CD14-positive monocyte (primary cell): ENCODE measurements at regions of chr1 and their contacts with region 1.

Region 1: GRCh38 chr1:186985889-186986491 is 157.2 kb downstream of the PLA2G4A start:
- DNase-seq: peak; percentile 27 to 63 (median 52)
- H3K4me3 ChIP-seq: no peak overlapping the region
- H3K4me3 Mint-ChIP-seq: no peak overlapping the region
- H3K27ac ChIP-seq: no peak overlapping the region
- H3K27ac Mint-ChIP-seq: no peak overlapping the region
- H3K4me1 ChIP-seq: peaks cover 0 to 5% of the 10 kb centered on the region in 2 donors
- H3K4me1 Mint-ChIP-seq: peaks cover 13% of the 10 kb centered on the region
- H3K27me3 ChIP-seq: no peaks in the 10 kb centered on the region
- H3K27me3 Mint-ChIP-seq: no peaks in the 10 kb centered on the region
- CTCF ChIP-seq: peak; percentile 80

Region 2: GRCh38 chr1:186404454-186405051 is 581.4 kb before region 1 on chr1:
- intact Hi-C with region 1: loop called in 1 of 2 experiments (anchors 10 kb)
- DNase-seq: peak; percentile 49 to 65 (median 62)
- H3K4me3 ChIP-seq: no peak overlapping the region
- H3K4me3 Mint-ChIP-seq: no peak overlapping the region
- H3K27ac ChIP-seq: peak overlapping the region in 1 of 2 donors; percentile 20
- H3K27ac Mint-ChIP-seq: peak overlapping the region in 2 of 7 donors; percentile 46 to 49
- H3K4me1 ChIP-seq: no peaks in the 10 kb centered on the region
- H3K4me1 Mint-ChIP-seq: peaks cover 2% of the 10 kb centered on the region
- H3K27me3 ChIP-seq: no peaks in the 10 kb centered on the region
- H3K27me3 Mint-ChIP-seq: peaks cover 0 to 2% (median 0%) of the 10 kb centered on the region in 3 donors
- CTCF ChIP-seq: peak; percentile 84

Region 3: DNA sequence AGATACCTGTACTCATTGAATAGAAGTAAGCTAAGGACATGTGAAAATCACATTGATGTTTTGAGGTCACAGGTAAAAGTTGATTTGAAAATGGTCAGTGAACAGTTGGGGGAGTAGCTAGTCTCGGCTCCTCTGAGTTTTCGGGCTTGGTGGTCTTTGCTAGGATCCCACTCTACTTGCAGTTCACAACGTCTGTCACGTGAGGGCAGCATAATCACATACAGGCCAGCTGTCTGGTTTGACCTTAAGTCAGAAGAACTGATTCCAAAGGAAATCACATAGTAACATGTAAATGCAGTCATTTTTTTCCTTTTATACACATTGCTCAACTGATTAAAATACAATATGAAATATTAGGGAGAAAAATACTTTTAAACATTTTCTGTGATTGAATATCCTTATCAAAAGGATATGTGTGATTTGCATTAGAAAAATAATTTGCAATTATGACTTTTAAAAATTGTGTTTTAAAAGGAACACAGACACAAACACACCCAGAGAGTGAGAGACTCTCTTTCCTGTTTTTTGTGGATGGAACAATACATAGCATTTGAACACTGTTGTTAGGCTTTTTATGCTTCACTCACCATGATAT is 503.2 kb before region 1 on chr1:
- intact Hi-C with region 1: loop called (anchors 5 to 10 kb)
- DNase-seq: peak; percentile 27 to 57 (median 53)
- H3K4me3 ChIP-seq: no peak overlapping the region
- H3K4me3 Mint-ChIP-seq: no peak overlapping the region
- H3K27ac ChIP-seq: no peak overlapping the region
- H3K27ac Mint-ChIP-seq: no peak overlapping the region
- H3K4me1 ChIP-seq: no peaks in the 10 kb centered on the region
- H3K4me1 Mint-ChIP-seq: no peaks in the 10 kb centered on the region
- H3K27me3 ChIP-seq: no peaks in the 10 kb centered on the region
- H3K27me3 Mint-ChIP-seq: peaks cover 0 to 3% (median 2%) of the 10 kb centered on the region in 3 donors
- CTCF ChIP-seq: peak; percentile 94

Region 4: DNA sequence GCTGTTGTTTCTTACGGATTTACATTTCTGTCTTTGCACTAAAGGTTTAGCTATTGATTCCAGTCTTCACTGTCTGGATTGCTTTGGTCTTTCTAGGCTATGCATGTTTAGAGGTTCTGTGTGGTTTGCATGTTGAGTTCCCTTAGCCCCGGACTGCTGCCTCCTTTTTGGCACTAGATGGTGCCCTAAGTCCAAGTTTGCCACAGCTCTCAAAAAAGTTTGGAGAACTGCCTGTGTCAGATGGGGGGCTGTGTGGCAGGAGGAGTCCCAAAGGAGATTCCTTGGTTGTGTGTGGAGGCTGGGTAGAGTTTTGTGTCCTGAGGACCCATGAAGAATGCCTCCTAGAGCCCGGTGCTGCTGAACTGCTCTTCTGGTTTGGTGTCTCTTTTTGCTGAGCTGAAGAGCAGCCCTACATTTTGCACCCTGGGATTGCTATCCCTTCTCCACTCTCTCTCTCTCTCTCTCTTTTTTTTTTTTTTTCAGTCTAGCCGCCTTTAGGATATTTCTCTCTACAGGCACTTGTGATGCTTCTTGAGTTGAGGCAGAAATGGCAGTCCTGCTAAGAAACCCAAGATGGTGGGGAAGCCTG is 380.1 kb before region 1 on chr1:
- intact Hi-C with region 1: loop called (anchors 5 kb)
- DNase-seq: peak; percentile 47 to 72 (median 68)
- H3K4me3 ChIP-seq: no peak overlapping the region
- H3K4me3 Mint-ChIP-seq: no peak overlapping the region
- H3K27ac ChIP-seq: no peak overlapping the region
- H3K27ac Mint-ChIP-seq: peak overlapping the region in 2 of 7 donors; percentile 73 to 80
- H3K4me1 ChIP-seq: peaks cover 0 to 1% of the 10 kb centered on the region in 2 donors
- H3K4me1 Mint-ChIP-seq: peaks cover 7% of the 10 kb centered on the region
- H3K27me3 ChIP-seq: no peaks in the 10 kb centered on the region
- H3K27me3 Mint-ChIP-seq: peaks cover 0 to 1% (median 0%) of the 10 kb centered on the region in 3 donors
- CTCF ChIP-seq: peak; percentile 86